B cell (primary cell): ENCODE measurements at regions of chr18 and their contacts with region 1.

Region 1: DNA sequence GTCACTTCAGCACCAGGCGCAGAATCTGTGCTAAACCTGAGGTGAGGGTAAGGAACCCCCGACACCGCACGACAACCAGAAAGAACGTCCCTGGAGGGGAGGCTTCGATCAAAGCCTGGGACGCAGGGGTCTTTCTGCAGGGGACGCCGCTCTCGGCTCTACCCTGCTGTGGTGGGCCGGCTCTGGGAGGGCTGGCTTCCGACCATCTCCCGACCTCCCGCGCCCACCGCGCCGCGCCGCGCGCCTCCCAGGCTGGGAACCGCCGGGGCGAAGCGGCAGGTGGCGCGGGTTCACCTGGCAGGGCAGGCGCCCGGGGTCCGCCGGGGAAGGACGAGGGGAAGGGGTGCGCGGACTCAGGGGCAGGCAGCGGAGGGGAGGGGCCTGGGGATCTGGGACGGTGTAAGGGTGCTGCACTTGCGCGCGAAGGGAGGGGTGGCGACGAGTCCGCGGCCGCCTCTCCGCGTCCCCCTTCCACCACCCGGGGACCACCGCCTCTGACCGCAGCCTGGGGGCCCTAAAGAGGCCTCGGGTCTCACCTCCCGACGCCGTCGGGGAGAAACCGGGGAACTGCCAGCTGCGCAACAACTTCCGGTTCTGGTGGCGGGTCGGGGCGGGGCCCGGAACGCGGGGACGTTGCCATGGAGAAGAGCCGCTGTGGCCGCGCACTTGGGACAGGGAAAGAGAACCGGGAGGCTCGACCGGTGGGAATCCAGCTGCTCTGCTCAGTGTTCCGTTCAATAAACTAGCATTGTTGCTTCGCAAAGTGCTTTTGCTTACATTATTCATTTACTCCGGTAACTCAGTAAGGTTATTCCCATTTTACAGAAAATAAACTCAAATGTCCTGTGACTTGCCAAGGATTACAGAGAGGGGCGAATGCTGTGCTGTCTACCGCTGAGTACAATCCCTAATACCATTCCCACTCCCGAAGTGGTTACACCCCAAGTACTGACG is at the start of gene ZNF396:
- DNase-seq: peak; percentile 82
- ATAC-seq: peak; percentile 69
- H3K4me3 ChIP-seq: peak within 1 kb of the TSS; percentile 63 to 88 (median 70)
- H3K4me3 Mint-ChIP-seq: peak within 1 kb of the TSS; percentile 93
- H3K27ac ChIP-seq: peak within 1 kb of the TSS in 1 of 2 donors; percentile 69
- H3K27ac Mint-ChIP-seq: peak within 1 kb of the TSS; percentile 88
- H3K4me1 ChIP-seq: peaks cover 7 to 10% of the 10 kb centered on the region in 2 donors
- H3K4me1 Mint-ChIP-seq: peaks cover 8% of the 10 kb centered on the region
- H3K27me3 ChIP-seq: no peaks in the 10 kb centered on the region
- H3K27me3 Mint-ChIP-seq: no peaks in the 10 kb centered on the region
- CTCF ChIP-seq: no peak
- total RNA-seq, gene ZNF396: 3.2 and 4.8 TPM in 2 replicates

Region 2: GRCh38 chr18:35158728-35159450 is 218.1 kb before region 1 on chr18:
- CTCF ChIA-PET with region 1: no interaction called
- POLR2A ChIA-PET with region 1: no interaction called
- intact Hi-C with region 1: no loop called
- DNase-seq: peak; percentile 74
- ATAC-seq: peak; percentile 94
- H3K4me3 ChIP-seq: peak overlapping the region in 2 of 5 experiments; percentile 10 to 21
- H3K4me3 Mint-ChIP-seq: peak overlapping the region; percentile 76
- H3K27ac ChIP-seq: peak overlapping the region; percentile 74 to 75
- H3K27ac Mint-ChIP-seq: peak overlapping the region; percentile 95
- H3K4me1 ChIP-seq: peaks cover 30 to 32% of the 10 kb centered on the region in 2 donors
- H3K4me1 Mint-ChIP-seq: peaks cover 30% of the 10 kb centered on the region
- H3K27me3 ChIP-seq: no peaks in the 10 kb centered on the region
- H3K27me3 Mint-ChIP-seq: no peaks in the 10 kb centered on the region
- CTCF ChIP-seq: no peak

Region 3: DNA sequence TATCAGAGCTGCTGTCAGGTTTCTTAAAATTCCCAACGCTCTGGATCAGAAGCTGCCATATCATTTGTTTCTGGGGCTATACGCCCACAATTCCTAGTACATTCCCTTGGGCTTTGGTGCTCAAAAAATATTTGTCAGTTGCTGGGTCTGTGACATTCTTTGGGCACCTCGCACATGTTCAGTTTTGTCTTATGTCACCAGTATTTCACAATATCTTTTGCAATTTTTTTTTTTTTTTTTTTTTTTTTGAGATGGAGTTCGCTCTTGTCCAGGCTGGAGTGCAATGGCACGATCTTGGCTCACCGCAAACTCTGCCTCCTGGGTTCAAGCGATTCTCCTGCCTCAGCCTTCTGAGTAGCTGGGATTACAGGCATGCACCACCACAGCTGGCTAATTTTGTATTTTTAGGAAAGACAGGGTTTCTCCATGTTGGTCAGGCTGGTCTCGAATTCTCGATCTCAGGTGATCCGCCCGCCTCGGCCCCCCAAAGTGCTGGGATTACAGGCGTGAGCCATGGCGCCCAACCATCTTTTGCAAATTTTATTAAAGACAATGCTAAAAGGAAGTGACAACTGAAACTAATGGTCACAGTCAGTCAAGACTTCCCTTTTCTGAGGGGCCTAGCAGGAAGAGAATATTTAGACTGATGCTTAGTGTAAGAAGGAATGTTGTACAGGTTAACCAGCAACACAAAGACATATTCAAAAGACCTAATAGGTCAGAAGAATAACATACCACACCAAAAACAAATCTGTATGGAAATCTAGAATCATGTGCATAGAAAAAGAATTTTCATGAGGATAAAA is 129.4 kb before region 1 on chr18:
- CTCF ChIA-PET with region 1: no interaction called
- POLR2A ChIA-PET with region 1: interaction called, 10 read pairs
- intact Hi-C with region 1: no loop called
- DNase-seq: peak; percentile 78
- ATAC-seq: peak; percentile 93
- H3K4me3 ChIP-seq: peak overlapping the region in 1 of 5 experiments; percentile 18
- H3K4me3 Mint-ChIP-seq: peak overlapping the region; percentile 73
- H3K27ac ChIP-seq: peak overlapping the region; percentile 0 to 66
- H3K27ac Mint-ChIP-seq: peak overlapping the region; percentile 91
- H3K4me1 ChIP-seq: peaks cover 24 to 26% of the 10 kb centered on the region in 2 donors
- H3K4me1 Mint-ChIP-seq: peaks cover 39% of the 10 kb centered on the region
- H3K27me3 ChIP-seq: no peaks in the 10 kb centered on the region
- H3K27me3 Mint-ChIP-seq: no peaks in the 10 kb centered on the region
- CTCF ChIP-seq: no peak